ENCODE measurements at regions of chr9 and their contacts with region 1.

Region 1: DNA sequence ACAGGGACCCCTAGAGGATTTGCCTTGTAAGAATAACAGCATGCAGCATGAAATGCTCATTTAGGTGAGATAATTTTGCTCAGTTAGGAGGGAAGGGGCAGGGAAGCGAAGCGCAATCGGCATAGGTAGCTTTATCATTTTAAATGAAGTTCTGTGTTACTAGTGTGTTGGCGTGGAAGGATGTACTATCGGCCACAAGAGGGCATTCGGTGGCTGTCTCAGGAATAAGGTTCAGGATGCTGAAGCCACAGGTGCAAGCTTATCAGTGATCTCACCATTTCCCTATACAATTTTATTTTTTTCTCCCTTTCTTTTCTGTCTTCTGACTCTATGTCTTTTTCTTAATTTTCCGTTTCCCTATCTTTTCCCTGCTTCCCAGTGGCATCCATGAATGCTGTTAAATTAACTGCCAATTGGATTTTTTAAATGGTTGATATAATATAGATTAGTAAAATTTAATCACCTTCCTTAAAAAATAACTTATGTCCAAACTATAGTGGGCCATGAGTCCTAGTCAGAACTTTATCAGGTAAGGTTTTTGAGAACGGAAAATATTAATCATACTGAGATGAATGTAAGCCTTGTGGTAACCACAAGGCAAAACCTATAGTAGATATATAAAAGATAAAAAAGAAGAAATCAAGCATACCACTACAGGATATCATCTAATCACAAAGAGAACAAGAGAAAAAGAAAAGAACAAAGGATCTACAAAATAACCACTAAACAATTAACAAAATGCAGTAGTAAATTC is 1.2 kb upstream of the INSL6 start:
- DNase-seq: peak; percentile 41
- H3K4me3 ChIP-seq: no peak overlapping the region
- H3K27ac ChIP-seq: no peak overlapping the region
- H3K27me3 ChIP-seq: no peaks in the 10 kb centered on the region
- CTCF ChIP-seq: peak; percentile 83

Region 2: GRCh38 chr9:4489919-4490704 is 696.5 kb before region 1 on chr9 and contains the start of gene SLC1A1:
- CTCF ChIA-PET with region 1: no interaction called
- POLR2A ChIA-PET with region 1: no interaction called
- DNase-seq: no peak
- H3K4me3 ChIP-seq: peak within 1 kb of the TSS; percentile 53
- H3K27ac ChIP-seq: no peak within 1 kb of the TSS
- H3K27me3 ChIP-seq: peaks cover 30% of the 10 kb centered on the region
- CTCF ChIP-seq: no peak
- polyA plus RNA-seq, gene SLC1A1: 0.45 and 0.55 TPM in 2 replicates

Region 3: GRCh38 chr9:5437254-5438216 is 250.9 kb after region 1 on chr9 and contains the start of gene PLGRKT:
- CTCF ChIA-PET with region 1: interaction called, 20 read pairs
- POLR2A ChIA-PET with region 1: no interaction called
- DNase-seq: peak; percentile 59
- H3K4me3 ChIP-seq: peak within 1 kb of the TSS; percentile 75
- H3K27ac ChIP-seq: peak within 1 kb of the TSS; percentile 73
- H3K27me3 ChIP-seq: no peaks in the 10 kb centered on the region
- CTCF ChIP-seq: peak; percentile 16; the same call in 1 of the 2 replicates
- polyA plus RNA-seq, gene PLGRKT: 8.6 and 13.1 TPM in 2 replicates

Region 4: GRCh38 chr9:5593904-5594303 is 407.3 kb after region 1 on chr9:
- CTCF ChIA-PET with region 1: interaction called, 109 read pairs
- POLR2A ChIA-PET with region 1: no interaction called
- DNase-seq: no peak
- H3K4me3 ChIP-seq: no peak overlapping the region
- H3K27ac ChIP-seq: no peak overlapping the region
- H3K27me3 ChIP-seq: no peaks in the 10 kb centered on the region
- CTCF ChIP-seq: no peak

Region 5: GRCh38 chr9:5608298-5609225 is 422.0 kb after region 1 on chr9:
- CTCF ChIA-PET with region 1: interaction called, 12 read pairs
- POLR2A ChIA-PET with region 1: no interaction called
- DNase-seq: no peak
- H3K4me3 ChIP-seq: no peak overlapping the region
- H3K27ac ChIP-seq: no peak overlapping the region
- H3K27me3 ChIP-seq: no peaks in the 10 kb centered on the region
- CTCF ChIP-seq: no peak